Sigmoid colon (tissue), 7 donors: ENCODE measurements at regions of chr19 and their contacts with region 1.

Region 1: GRCh38 chr19:11535792-11536595 is 2.7 kb upstream of the CNN1 start:
- DNase-seq: peak; percentile 97
- H3K4me3 ChIP-seq: peak overlapping the region; percentile 27 to 46 (median 40)
- H3K27ac ChIP-seq: peak overlapping the region; percentile 94 to 99 (median 98)
- H3K4me1 ChIP-seq: peaks cover 0 to 32% (median 27%) of the 10 kb centered on the region in 4 donors
- H3K27me3 ChIP-seq: no peaks in the 10 kb centered on the region
- CTCF ChIP-seq: peak in 3 of 4 experiments; percentile 70 to 90 (median 85)
- EP300 ChIP-seq: peak in 2 of 4 donors; percentile 38 to 63
- POLR2A ChIP-seq: peak; percentile 69 to 84

Region 2: DNA sequence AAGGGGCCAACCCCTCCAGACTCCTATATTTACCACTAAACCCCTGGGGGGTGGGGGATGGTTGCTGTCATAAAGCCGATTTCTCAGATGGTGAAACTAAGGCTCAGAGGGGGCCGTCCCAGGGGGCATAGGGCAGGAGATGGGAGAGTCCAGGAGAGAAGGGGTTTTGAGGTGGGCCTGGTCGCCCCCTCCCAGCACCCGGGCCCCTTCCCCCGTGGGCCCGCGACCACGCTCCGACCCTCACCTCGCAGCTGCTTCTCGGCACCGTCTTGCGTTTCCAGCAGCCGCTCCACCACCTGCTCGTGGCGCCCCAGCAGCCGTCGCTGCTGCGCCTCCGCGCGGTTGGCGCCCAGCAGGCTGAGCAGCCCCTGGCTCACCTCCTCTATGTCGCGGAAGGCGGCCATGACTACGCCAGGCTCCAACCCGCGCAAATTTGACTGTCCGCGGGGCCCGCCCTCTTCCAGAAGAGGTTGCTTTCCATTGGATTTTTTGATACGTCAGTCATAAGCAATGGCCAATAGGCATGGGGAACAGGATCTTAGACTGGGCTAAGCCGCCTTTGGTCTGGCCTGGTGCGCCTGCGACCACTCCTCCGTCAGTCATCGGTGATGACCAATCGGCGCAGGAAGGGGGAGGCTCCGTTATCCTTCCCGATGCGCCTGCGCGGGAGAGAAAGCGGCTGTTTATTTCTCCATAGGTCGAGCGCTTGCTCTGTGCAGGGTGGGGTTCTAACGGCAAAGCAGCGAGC is 380.4 kb before region 1 on chr19 and contains the start of gene SPC24:
- intact Hi-C with region 1: loop called (anchors 5 kb)
- DNase-seq: peak; percentile 98
- H3K4me3 ChIP-seq: peak within 1 kb of the TSS; percentile 24 to 64 (median 54)
- H3K27ac ChIP-seq: peak within 1 kb of the TSS; percentile 86 to 95 (median 87)
- H3K4me1 ChIP-seq: peaks cover 0 to 85% (median 77%) of the 10 kb centered on the region in 4 donors
- H3K27me3 ChIP-seq: no peaks in the 10 kb centered on the region
- CTCF ChIP-seq: no peak
- EP300 ChIP-seq: peak in 1 of 4 donors; percentile 7
- POLR2A ChIP-seq: no peak
- total RNA-seq, gene SPC24: 0.99 to 6.0 (median 2.8) TPM

Region 3: GRCh38 chr19:11577451-11578257 is 41.7 kb after region 1 on chr19 and contains the start of gene ACP5:
- intact Hi-C with region 1: no loop called
- DNase-seq: no peak
- H3K4me3 ChIP-seq: peak within 1 kb of the TSS; percentile 8 to 46 (median 32)
- H3K27ac ChIP-seq: peak within 1 kb of the TSS in 3 of 4 donors; percentile 35 to 59 (median 50)
- H3K4me1 ChIP-seq: peaks cover 0 to 13% (median 9%) of the 10 kb centered on the region in 4 donors
- H3K27me3 ChIP-seq: peaks cover 6 to 23% (median 15%) of the 10 kb centered on the region in 3 donors
- CTCF ChIP-seq: no peak
- EP300 ChIP-seq: no peak
- POLR2A ChIP-seq: no peak
- total RNA-seq, gene ACP5: 7.6 to 23.5 (median 9.8) TPM